A549 (cell line): ENCODE measurements at regions of chr6 and their contacts with region 1.

Region 1: GRCh38 chr6:34610819-34611477 is 54.8 kb upstream of the SPDEF start:
- DNase-seq: peak; percentile 11 to 69
- ATAC-seq: peak; percentile 78 to 80; a peak in 5 of 6 replicates
- H3K4me3 ChIP-seq: no peak overlapping the region
- H3K27ac ChIP-seq: peak overlapping the region; percentile 50 to 54; a peak in 4 of 6 replicates
- H3K4me1 ChIP-seq: peaks cover 31% of the 10 kb centered on the region
- CTCF ChIP-seq: no peak
- EP300 ChIP-seq: no peak
- POLR2A ChIP-seq: no peak
- RAD21 ChIP-seq: no peak

Region 2: GRCh38 chr6:34161857-34162515 is 449.0 kb before region 1 on chr6:
- CTCF ChIA-PET with region 1: interaction called, 19 read pairs
- POLR2A ChIA-PET with region 1: no interaction called
- DNase-seq: no peak
- ATAC-seq: no peak
- H3K4me3 ChIP-seq: no peak overlapping the region
- H3K27ac ChIP-seq: no peak overlapping the region
- H3K4me1 ChIP-seq: no peaks in the 10 kb centered on the region
- CTCF ChIP-seq: no peak
- EP300 ChIP-seq: no peak
- POLR2A ChIP-seq: no peak
- RAD21 ChIP-seq: no peak

Region 3: GRCh38 chr6:34459899-34460593 is 150.9 kb before region 1 on chr6:
- CTCF ChIA-PET with region 1: interaction called, 72 read pairs
- POLR2A ChIA-PET with region 1: interaction called, 4 read pairs
- DNase-seq: peak; percentile 36 to 62
- ATAC-seq: peak; percentile 69 to 76; a peak in 5 of 6 replicates
- H3K4me3 ChIP-seq: no peak overlapping the region
- H3K27ac ChIP-seq: no peak overlapping the region
- H3K4me1 ChIP-seq: peaks cover 10% of the 10 kb centered on the region
- CTCF ChIP-seq: peak; percentile 75
- EP300 ChIP-seq: no peak
- POLR2A ChIP-seq: no peak
- RAD21 ChIP-seq: peak; percentile 75 to 84

Region 4: DNA sequence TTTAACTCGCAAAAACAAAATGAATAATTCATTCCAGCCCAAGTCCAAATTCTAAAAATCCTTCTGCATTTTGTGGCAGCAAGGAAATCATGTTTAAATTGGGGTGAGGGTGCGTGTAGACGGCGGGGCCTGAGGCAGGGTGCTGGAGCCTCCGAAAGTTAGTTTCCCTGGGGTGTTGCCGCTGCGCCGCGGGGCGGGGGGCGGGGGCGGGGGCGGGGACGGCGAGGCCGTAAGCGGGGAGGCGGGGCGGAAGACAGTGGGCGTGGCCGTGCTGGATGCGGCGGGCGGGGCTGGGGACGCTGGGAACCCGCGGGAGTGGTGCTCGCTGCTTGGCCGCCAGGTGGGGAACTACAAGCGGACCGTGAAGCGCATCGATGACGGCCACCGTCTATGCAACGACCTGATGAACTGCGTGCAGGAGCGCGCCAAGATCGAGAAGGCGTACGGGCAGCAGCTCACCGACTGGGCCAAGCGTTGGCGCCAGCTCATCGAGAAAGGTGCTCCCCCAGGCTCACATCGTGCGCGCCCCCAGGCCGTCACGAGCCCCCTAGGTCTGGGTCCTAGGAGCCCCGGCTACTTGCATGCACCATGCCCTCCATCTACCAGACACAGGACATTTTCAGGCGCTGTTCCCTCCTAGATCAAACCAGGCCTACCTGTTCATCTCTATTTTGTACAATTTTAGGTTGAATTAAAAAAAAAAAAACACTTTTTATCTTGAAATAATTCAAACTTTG is 83.8 kb before region 1 on chr6:
- CTCF ChIA-PET with region 1: interaction called, 33 read pairs
- POLR2A ChIA-PET with region 1: no interaction called
- DNase-seq: peak; percentile 85 to 91
- ATAC-seq: peak; percentile 86 to 95
- H3K4me3 ChIP-seq: peak overlapping the region; percentile 29; the same call in 1 of the 3 replicates
- H3K27ac ChIP-seq: peak overlapping the region; percentile 75 to 77
- H3K4me1 ChIP-seq: peaks cover 23% of the 10 kb centered on the region
- CTCF ChIP-seq: peak; percentile 54
- EP300 ChIP-seq: no peak
- POLR2A ChIP-seq: 0 out of 2 replicates have a peak, but pooled peaks have one; percentile 20
- RAD21 ChIP-seq: peak; percentile 56 to 75

Region 5: DNA sequence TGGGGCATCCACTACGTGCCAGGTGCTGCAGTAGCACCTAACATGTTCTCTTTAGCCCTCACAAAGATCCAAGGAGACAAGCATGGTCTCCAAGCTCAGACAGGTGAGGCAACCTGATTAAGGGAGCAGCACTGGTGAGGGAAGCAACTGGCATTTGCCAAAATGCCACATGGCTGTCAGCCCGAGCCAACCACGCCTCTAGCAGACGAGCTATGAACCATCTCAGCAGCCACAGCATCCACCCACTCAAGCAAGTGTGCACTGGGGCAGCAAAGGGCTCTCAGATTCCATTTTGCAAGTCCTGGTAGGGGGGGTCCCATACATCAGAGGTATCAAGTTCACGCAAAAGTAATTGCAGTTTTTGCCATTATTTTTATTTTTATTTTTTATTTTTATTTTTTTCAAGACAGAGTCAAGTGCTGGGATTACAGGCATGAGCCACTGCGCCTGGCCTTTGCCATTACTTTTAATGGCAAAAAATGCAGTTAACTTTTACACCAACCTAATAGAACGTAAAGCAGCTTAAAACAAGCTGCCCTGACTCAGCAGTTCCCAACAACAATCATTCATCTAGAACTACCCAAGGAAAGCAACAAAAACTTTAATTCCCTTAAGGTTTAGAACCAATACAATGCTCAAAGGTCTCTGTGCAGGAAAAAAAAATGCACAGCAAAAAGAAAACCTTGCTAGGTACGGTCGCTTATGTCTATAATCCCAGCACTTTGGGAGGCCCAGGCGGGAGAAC is 18.6 kb before region 1 on chr6:
- CTCF ChIA-PET with region 1: interaction called, 30 read pairs
- POLR2A ChIA-PET with region 1: no interaction called
- DNase-seq: no peak
- ATAC-seq: no peak
- H3K4me3 ChIP-seq: no peak overlapping the region
- H3K27ac ChIP-seq: no peak overlapping the region
- H3K4me1 ChIP-seq: peaks cover 11% of the 10 kb centered on the region; the same call in 2 of the 3 replicates
- CTCF ChIP-seq: no peak
- EP300 ChIP-seq: no peak
- POLR2A ChIP-seq: no peak
- RAD21 ChIP-seq: no peak

Region 6: GRCh38 chr6:34633256-34633655 is 22.3 kb after region 1 on chr6:
- CTCF ChIA-PET with region 1: no interaction called
- POLR2A ChIA-PET with region 1: no interaction called
- DNase-seq: no peak
- ATAC-seq: no peak
- H3K4me3 ChIP-seq: no peak overlapping the region
- H3K27ac ChIP-seq: no peak overlapping the region
- H3K4me1 ChIP-seq: peaks cover 31% of the 10 kb centered on the region
- CTCF ChIP-seq: no peak
- EP300 ChIP-seq: no peak
- POLR2A ChIP-seq: no peak
- RAD21 ChIP-seq: no peak